ENCODE measurements at regions of chr17 and their contacts with region 1.

Region 1: GRCh38 chr17:4939796-4940624 is at the starts of genes RNF167 and SLC25A11:
- DNase-seq: peak; percentile 99
- H3K4me3 ChIP-seq: peak within 1 kb of the TSS; percentile 62 to 83 (median 73)
- H3K27ac ChIP-seq: peak within 1 kb of the TSS; percentile 91 to 96 (median 94)
- H3K4me1 ChIP-seq: peaks cover 0 to 57% (median 42%) of the 10 kb centered on the region in 4 donors
- H3K27me3 ChIP-seq: no peaks in the 10 kb centered on the region
- CTCF ChIP-seq: no peak
- EP300 ChIP-seq: peak in 1 of 4 donors; percentile 64
- POLR2A ChIP-seq: peak; percentile 32 to 48
- total RNA-seq, gene RNF167: 51.2 to 71.2 (median 60.3) TPM
- total RNA-seq, gene SLC25A11: 41.0 to 60.3 (median 48.6) TPM

Region 2: GRCh38 chr17:4908301-4908700 is 31.7 kb before region 1 on chr17:
- intact Hi-C with region 1: loop called (anchors 2 kb)
- DNase-seq: no peak
- H3K4me3 ChIP-seq: no peak overlapping the region
- H3K27ac ChIP-seq: peak overlapping the region in 2 of 4 donors; percentile 15 to 57
- H3K4me1 ChIP-seq: peaks cover 0 to 11% (median 5%) of the 10 kb centered on the region in 4 donors
- H3K27me3 ChIP-seq: peaks cover 0 to 15% (median 7%) of the 10 kb centered on the region in 3 donors
- CTCF ChIP-seq: no peak
- EP300 ChIP-seq: no peak
- POLR2A ChIP-seq: no peak